Head of caudate nucleus (tissue), 42 donors: ENCODE measurements at regions of chr9 and their contacts with region 1.

Region 1: GRCh38 chr9:74952281-74953151 is at the start of gene C9orf40:
- DNase-seq: peak; percentile 72 to 95 (median 91)

Region 2: DNA sequence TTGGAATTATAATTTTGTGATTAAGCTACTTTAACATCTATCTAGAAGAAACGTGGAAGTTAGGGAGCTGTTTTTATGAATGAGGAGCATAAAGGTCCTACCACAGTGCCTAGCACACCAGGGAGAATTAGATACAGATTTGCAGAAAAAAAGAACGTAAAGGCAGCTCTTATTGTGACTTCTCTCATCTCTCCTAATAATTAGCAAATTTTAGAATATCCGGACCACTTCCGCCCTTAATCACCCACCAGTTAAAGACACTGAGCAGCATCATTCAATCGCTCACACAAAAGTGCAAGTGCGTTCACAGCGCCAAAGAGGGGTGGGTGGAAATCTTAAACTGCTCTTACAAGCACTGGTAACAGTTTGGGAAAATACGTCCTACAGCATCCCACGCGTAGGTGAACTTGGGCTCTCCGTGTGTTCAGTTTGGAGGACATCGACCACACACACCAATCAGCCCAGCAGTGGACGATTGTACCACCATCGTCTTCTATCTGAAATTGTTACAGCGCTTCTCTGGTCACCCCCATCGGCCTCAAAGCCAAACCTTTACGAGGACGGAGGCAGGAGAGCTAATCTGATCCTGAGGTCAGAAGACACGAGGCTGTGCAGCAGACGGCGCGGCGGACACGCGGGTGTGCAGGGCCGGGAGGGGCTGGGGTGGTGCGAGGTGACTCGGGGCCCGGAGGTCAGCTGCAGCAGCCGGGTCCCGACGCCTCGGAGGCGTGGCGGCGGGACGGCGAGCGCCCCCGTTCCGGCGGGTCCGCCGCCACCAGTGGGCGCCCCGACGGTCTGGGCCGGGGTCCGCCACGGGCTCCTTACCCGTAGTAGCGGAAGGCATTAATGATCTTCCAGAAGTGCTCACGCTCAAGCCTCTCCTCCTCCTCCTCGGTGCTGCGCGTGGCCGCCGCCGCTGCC is 74.9 kb after region 1 on chr9:
- intact Hi-C with region 1: loop called (anchors 5 kb)
- DNase-seq: peak in 40 of 42 donors; percentile 32 to 81 (median 59)

Region 3: GRCh38 chr9:75083188-75083970 is 130.9 kb after region 1 on chr9:
- intact Hi-C with region 1: loop called (anchors 2 kb)
- DNase-seq: peak in 31 of 42 donors; percentile 23 to 83 (median 52)

Region 4: GRCh38 chr9:75130621-75131230 is 178.2 kb after region 1 on chr9:
- intact Hi-C with region 1: no loop called
- DNase-seq: no peak